ENCODE measurements at regions of chr3 and their contacts with region 1.

Region 1: GRCh38 chr3:154252759-154253638 is 71.3 kb downstream of the DHX36 start:
- DNase-seq: peak; percentile 72
- H3K4me3 ChIP-seq: no peak overlapping the region
- H3K27ac ChIP-seq: no peak overlapping the region
- H3K27me3 ChIP-seq: no peaks in the 10 kb centered on the region
- CTCF ChIP-seq: peak; percentile 97

Region 2: GRCh38 chr3:154089452-154090420 is 163.3 kb before region 1 on chr3:
- CTCF ChIA-PET with region 1: interaction called, 13 read pairs
- POLR2A ChIA-PET with region 1: no interaction called
- DNase-seq: no peak
- H3K4me3 ChIP-seq: no peak overlapping the region
- H3K27ac ChIP-seq: no peak overlapping the region
- H3K27me3 ChIP-seq: no peaks in the 10 kb centered on the region
- CTCF ChIP-seq: no peak

Region 3: DNA sequence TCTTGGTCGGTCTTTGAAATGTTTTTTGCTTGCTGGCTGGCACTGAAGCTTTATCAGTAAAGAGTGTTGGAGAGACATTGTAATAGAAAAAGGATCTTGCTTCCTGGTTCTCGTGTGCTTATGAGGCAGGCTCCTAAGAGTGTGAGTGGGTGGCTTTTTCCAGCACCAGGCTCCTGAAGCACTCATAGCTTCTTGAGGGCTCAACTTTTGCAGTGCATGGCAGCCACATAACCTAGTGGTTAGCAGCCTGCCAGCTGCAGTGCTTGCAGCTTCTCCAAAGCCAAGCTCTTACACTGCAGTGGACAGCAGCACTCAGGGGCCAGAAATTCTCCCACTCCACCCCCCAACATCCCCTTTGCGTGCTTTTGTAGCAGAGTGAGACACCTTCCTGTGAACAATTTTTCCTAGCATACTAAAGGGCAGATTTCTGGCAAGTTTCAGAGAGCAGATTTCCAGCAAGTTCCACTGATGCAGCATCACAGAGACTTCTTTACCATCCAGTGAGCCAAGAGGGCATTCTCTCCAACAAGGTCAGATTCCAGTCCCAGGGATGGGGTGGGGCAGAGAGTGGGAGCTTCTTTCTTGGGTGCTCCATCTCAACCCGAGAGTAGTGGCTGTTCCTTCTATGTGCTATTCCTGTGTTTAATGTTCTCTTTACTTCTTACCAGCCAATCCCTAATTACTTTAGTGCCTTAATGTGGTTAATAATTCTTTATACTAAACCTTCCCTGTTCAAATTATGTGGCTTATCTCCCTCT is 147.6 kb before region 1 on chr3:
- CTCF ChIA-PET with region 1: interaction called, 57 read pairs
- POLR2A ChIA-PET with region 1: no interaction called
- DNase-seq: no peak
- H3K4me3 ChIP-seq: no peak overlapping the region
- H3K27ac ChIP-seq: no peak overlapping the region
- H3K27me3 ChIP-seq: no peaks in the 10 kb centered on the region
- CTCF ChIP-seq: no peak

Region 4: DNA sequence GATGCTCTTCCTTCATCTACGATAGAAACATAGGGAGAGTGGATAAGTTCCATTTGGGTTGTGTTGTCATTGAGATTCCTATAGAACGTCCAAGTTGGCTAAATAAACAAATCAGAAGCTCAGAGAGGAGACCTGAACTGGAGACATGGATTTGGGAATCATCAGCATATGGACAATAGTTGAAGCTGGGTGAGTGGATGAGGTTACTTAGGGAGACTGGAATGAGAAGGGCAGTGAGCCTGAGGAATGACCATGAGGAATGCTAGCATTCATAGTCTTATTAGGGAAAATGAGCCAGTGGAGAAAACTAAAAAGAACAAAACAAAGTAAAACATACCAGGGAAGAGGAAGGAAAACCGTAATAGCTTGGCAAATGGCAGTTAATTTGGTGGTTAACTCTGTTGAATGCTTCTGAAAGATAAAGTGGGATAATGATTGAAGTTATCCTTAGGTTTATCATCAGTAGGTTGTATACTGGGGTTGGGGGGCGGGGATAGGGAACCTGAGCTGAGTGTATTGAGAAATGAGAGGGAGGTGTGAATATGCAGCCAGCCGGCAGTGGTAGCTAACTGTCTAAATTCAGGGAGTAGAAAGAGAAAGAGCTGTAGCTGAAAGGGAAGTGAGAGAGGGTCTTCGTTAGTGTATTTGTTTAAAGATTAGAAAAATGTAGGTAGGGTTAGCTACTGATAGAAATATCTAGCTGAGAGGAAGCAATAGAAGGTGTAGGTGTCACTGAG is 57.2 kb before region 1 on chr3:
- CTCF ChIA-PET with region 1: interaction called, 19 read pairs
- POLR2A ChIA-PET with region 1: no interaction called
- DNase-seq: no peak
- H3K4me3 ChIP-seq: no peak overlapping the region
- H3K27ac ChIP-seq: no peak overlapping the region
- H3K27me3 ChIP-seq: no peaks in the 10 kb centered on the region
- CTCF ChIP-seq: no peak

Region 5: DNA sequence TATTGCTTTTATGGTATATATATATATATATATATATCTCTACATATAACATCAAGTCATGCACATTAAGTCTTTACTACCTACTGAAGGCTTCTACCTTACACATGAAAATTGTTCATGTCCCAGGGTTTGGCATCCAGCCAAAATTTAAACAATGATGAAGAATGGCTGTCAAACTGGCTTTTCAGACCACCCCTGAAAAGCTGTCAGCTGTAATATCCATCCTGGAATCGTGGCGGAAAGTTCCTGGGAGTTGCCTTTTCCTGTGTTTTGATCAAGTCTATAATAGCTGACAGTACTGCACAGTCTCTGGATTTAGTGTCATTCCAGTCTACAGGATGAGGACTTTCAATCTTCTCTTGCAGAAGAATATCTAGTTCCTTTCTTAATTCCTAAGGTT is 23.0 kb after region 1 on chr3:
- CTCF ChIA-PET with region 1: interaction called, 11 read pairs
- POLR2A ChIA-PET with region 1: interaction called, 5 read pairs
- DNase-seq: no peak
- H3K4me3 ChIP-seq: no peak overlapping the region
- H3K27ac ChIP-seq: no peak overlapping the region
- H3K27me3 ChIP-seq: no peaks in the 10 kb centered on the region
- CTCF ChIP-seq: no peak

Region 6: GRCh38 chr3:154378311-154378710 is 125.3 kb after region 1 on chr3:
- CTCF ChIA-PET with region 1: no interaction called
- POLR2A ChIA-PET with region 1: no interaction called
- DNase-seq: no peak
- H3K4me3 ChIP-seq: no peak overlapping the region
- H3K27ac ChIP-seq: no peak overlapping the region
- H3K27me3 ChIP-seq: no peaks in the 10 kb centered on the region
- CTCF ChIP-seq: no peak

Region 7: GRCh38 chr3:154872074-154872473 is 619.1 kb after region 1 on chr3:
- CTCF ChIA-PET with region 1: no interaction called
- POLR2A ChIA-PET with region 1: no interaction called
- DNase-seq: no peak
- H3K4me3 ChIP-seq: no peak overlapping the region
- H3K27ac ChIP-seq: no peak overlapping the region
- H3K27me3 ChIP-seq: no peaks in the 10 kb centered on the region
- CTCF ChIP-seq: no peak

Measured in AG04450 (cell line).